ENCODE measurements at regions of chr1 and their contacts with region 1.

Region 1: DNA sequence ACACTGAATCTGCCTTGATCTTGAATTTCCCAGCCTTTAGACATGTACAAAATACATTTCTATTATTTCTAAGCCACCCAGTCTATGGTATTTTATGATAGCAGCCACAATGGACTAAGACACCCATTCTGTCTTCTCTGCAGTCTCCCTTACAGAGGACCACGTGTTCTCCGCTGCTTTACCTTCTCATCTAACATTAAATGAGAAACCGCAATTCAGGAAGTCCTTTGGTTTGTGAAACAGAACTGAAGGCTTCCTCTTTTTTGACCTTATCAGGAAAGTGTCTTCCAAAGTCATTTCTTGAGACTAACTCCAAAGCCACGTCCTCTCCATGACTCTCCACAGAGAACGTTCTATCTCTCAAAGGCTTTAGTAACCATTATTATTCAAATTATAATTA is 560.1 kb downstream of the OMA1 start:
- DNase-seq: no peak
- H3K4me3 ChIP-seq: no peak overlapping the region
- H3K27ac ChIP-seq: no peak overlapping the region
- H3K4me1 ChIP-seq: no peaks in the 10 kb centered on the region
- H3K27me3 ChIP-seq: no peaks in the 10 kb centered on the region
- CTCF ChIP-seq: no peak
- POLR2A ChIP-seq: no peak

Region 2: DNA sequence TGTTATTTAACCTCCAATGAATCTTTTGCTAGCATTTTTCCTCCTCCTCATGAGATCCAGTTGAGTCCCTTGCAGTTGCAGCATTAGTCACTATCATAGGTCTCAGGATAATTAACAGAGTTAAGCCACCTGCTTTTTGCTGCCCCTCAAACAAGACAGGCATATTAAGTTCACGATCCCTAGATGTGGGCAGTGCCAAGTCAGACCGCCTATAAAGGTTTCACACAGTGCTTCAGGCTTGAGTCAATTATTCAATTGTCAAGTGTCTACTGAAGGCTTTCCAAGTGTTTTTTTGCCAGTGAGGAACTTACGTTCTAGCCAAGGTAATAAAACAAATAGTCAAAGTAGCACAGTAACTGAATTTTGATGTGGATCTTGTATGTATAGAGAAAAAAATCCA is 737.6 kb before region 1 on chr1:
- CTCF ChIA-PET with region 1: no interaction called
- POLR2A ChIA-PET with region 1: no interaction called
- dilution Hi-C with region 1: no loop called
- intact Hi-C with region 1: loop called (anchors 5 kb)
- DNase-seq: no peak
- H3K4me3 ChIP-seq: no peak overlapping the region
- H3K27ac ChIP-seq: no peak overlapping the region
- H3K4me1 ChIP-seq: no peaks in the 10 kb centered on the region
- H3K27me3 ChIP-seq: no peaks in the 10 kb centered on the region
- CTCF ChIP-seq: no peak
- POLR2A ChIP-seq: no peak

Region 3: DNA sequence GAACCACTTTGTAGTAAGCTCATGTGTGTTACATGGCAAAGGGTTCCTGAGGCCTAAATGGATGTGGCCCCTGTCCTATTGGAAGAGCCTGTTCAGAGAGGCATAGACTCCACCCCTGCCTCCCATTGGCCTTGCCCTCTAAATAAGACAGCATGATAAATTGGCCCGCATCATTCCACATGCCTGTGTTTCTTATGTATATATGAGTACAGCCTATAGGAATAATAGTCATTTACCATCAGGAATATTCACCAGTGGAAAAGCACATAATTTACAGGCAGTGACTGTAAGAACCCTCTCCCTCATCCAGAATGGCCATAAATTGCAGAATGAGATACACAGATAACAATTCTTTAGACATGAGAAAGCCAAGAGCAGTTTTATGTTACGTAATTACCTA is 43.1 kb before region 1 on chr1:
- CTCF ChIA-PET with region 1: no interaction called
- POLR2A ChIA-PET with region 1: no interaction called
- dilution Hi-C with region 1: no loop called
- intact Hi-C with region 1: no loop called
- DNase-seq: no peak
- H3K4me3 ChIP-seq: no peak overlapping the region
- H3K27ac ChIP-seq: no peak overlapping the region
- H3K4me1 ChIP-seq: no peaks in the 10 kb centered on the region
- H3K27me3 ChIP-seq: no peaks in the 10 kb centered on the region
- CTCF ChIP-seq: no peak
- POLR2A ChIP-seq: no peak

Region 4: GRCh38 chr1:57966751-57967406 is 19.6 kb before region 1 on chr1:
- CTCF ChIA-PET with region 1: no interaction called
- POLR2A ChIA-PET with region 1: no interaction called
- dilution Hi-C with region 1: no loop called
- intact Hi-C with region 1: no loop called
- DNase-seq: no peak
- H3K4me3 ChIP-seq: no peak overlapping the region
- H3K27ac ChIP-seq: no peak overlapping the region
- H3K4me1 ChIP-seq: no peaks in the 10 kb centered on the region
- H3K27me3 ChIP-seq: no peaks in the 10 kb centered on the region
- CTCF ChIP-seq: no peak
- POLR2A ChIP-seq: no peak

Region 5: DNA sequence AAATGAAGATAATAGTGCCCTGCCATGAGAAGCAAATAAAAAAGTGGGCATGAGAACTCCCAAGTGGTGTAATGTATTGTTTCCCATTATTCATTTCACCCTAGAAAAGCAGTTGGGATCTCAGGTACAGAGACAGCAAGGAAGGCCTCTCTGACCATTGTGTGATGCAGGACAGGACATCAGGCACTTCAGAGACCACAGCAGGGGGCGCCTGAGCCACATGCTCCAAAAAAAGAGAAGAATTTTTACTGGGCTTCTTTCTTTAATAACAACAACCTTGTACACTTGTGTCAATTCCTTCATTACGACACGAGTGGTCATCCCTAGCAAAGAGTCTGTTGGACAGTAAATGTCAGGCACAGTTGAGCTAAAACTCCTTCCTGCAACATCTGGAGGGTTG is 26.8 kb after region 1 on chr1:
- CTCF ChIA-PET with region 1: no interaction called
- POLR2A ChIA-PET with region 1: no interaction called
- dilution Hi-C with region 1: no loop called
- intact Hi-C with region 1: loop called (anchors 1 kb)
- DNase-seq: no peak
- H3K4me3 ChIP-seq: no peak overlapping the region
- H3K27ac ChIP-seq: no peak overlapping the region
- H3K4me1 ChIP-seq: no peaks in the 10 kb centered on the region
- H3K27me3 ChIP-seq: no peaks in the 10 kb centered on the region
- CTCF ChIP-seq: no peak
- POLR2A ChIP-seq: no peak

Measured in endothelial cell of umbilical vein (primary cell).